ENCODE measurements at regions of chr17 and their contacts with region 1.

Region 1: GRCh38 chr17:42248351-42249179 is 27.6 kb downstream of the STAT5B start:
- DNase-seq: peak; percentile 51 to 95 (median 86)
- ATAC-seq: peak; percentile 90 to 96 (median 92)
- H3K4me3 ChIP-seq: peak overlapping the region; percentile 44 to 63
- H3K4me3 Mint-ChIP-seq: peak overlapping the region; percentile 76 to 86 (median 81)
- H3K27ac ChIP-seq: peak overlapping the region; percentile 91
- H3K27ac Mint-ChIP-seq: peak overlapping the region; percentile 97 to 99
- H3K4me1 ChIP-seq: peaks cover 46 to 50% of the 10 kb centered on the region in 2 experiments
- H3K4me1 Mint-ChIP-seq: peaks cover 74 to 79% (median 78%) of the 10 kb centered on the region in 3 donors
- H3K27me3 ChIP-seq: no peaks in the 10 kb centered on the region
- H3K27me3 Mint-ChIP-seq: no peaks in the 10 kb centered on the region

Region 2: GRCh38 chr17:42221937-42222745 is 26.4 kb before region 1 on chr17:
- CTCF ChIA-PET with region 1: interaction called, 4 to 25 read pairs
- POLR2A ChIA-PET with region 1: interaction called in 1 of 2 experiments, 4 read pairs
- DNase-seq: peak; percentile 7 to 85 (median 57)
- ATAC-seq: peak; percentile 87 to 95 (median 90)
- H3K4me3 ChIP-seq: no peak overlapping the region
- H3K4me3 Mint-ChIP-seq: no peak overlapping the region
- H3K27ac ChIP-seq: no peak overlapping the region
- H3K27ac Mint-ChIP-seq: peak overlapping the region; percentile 29 to 31
- H3K4me1 ChIP-seq: peaks cover 0 to 5% of the 10 kb centered on the region in 2 experiments
- H3K4me1 Mint-ChIP-seq: peaks cover 0 to 14% (median 10%) of the 10 kb centered on the region in 3 donors
- H3K27me3 ChIP-seq: no peaks in the 10 kb centered on the region
- H3K27me3 Mint-ChIP-seq: no peaks in the 10 kb centered on the region

Region 3: GRCh38 chr17:42266918-42267778 is 18.6 kb after region 1 on chr17:
- CTCF ChIA-PET with region 1: interaction called in 1 of 2 experiments, 8 read pairs
- POLR2A ChIA-PET with region 1: interaction called, 15 to 147 read pairs
- DNase-seq: peak in 27 of 35 experiments; percentile 19 to 87 (median 53)
- ATAC-seq: peak; percentile 67 to 90 (median 78)
- H3K4me3 ChIP-seq: no peak overlapping the region
- H3K4me3 Mint-ChIP-seq: peak overlapping the region; percentile 24 to 29 (median 28)
- H3K27ac ChIP-seq: peak overlapping the region; percentile 83
- H3K27ac Mint-ChIP-seq: peak overlapping the region; percentile 84 to 91
- H3K4me1 ChIP-seq: peaks cover 34 to 41% of the 10 kb centered on the region in 2 experiments
- H3K4me1 Mint-ChIP-seq: peaks cover 58 to 68% (median 67%) of the 10 kb centered on the region in 3 donors
- H3K27me3 ChIP-seq: no peaks in the 10 kb centered on the region
- H3K27me3 Mint-ChIP-seq: no peaks in the 10 kb centered on the region

Region 4: GRCh38 chr17:42287926-42288802 is 39.6 kb after region 1 on chr17 and contains the start of gene STAT5A:
- CTCF ChIA-PET with region 1: interaction called, 4 to 5 read pairs
- POLR2A ChIA-PET with region 1: interaction called, 5 to 29 read pairs
- DNase-seq: peak; percentile 56 to 88 (median 77)
- ATAC-seq: peak; percentile 82 to 87 (median 86)
- H3K4me3 ChIP-seq: peak within 1 kb of the TSS; percentile 88 to 90
- H3K4me3 Mint-ChIP-seq: peak within 1 kb of the TSS; percentile 88 to 95 (median 92)
- H3K27ac ChIP-seq: peak within 1 kb of the TSS; percentile 96
- H3K27ac Mint-ChIP-seq: peak within 1 kb of the TSS; percentile 95 to 98
- H3K4me1 ChIP-seq: peaks cover 19 to 57% of the 10 kb centered on the region in 2 experiments
- H3K4me1 Mint-ChIP-seq: peaks cover 49 to 60% (median 57%) of the 10 kb centered on the region in 3 donors
- H3K27me3 ChIP-seq: no peaks in the 10 kb centered on the region
- H3K27me3 Mint-ChIP-seq: no peaks in the 10 kb centered on the region
- total RNA-seq, gene STAT5A: 141 to 160 (median 147) TPM

Region 5: DNA sequence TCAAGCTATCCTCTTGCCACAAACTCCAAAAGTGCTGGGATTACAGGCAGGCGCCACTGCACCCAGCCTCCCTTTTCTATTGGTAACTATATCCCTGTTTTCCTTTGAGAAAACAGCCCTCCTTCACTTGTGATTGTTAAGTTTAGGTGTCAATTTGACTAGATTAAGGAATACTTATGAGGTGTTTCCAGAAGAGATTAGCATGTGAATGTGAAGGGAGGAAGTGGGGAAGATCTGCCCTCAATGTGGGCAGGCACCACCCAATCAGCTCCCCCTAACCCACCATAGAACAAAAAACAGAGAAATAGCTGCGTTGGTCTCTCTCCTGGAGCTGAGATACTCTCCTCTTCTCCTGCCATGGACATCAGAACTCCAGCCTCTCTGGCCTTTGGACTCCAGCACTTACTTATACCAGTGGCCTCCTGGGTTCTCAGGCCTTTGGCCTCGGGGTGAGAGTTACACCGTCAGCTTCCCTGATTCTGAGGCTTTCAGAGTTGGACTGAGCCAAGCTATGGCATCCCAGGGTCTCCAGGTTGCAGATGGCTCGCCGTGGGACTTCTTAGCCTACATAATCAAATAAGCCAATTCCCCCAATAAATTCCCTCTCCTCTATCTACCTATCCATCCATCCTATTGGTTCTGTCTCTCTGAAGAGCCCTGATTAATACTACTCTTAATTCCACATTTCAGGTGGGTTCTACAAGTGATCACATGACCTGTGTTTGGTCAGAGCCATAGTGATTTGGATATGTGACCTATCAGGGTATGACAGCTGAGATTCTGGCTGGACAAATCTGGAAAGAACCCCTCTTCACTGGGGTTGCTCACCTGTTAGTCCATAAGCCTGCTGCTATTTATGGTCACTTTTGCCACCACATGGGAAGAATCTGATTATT is 151.6 kb after region 1 on chr17:
- CTCF ChIA-PET with region 1: no interaction called
- POLR2A ChIA-PET with region 1: interaction called in 1 of 2 experiments, 10 read pairs
- DNase-seq: no peak
- ATAC-seq: peak; percentile 55 to 79 (median 67)
- H3K4me3 ChIP-seq: no peak overlapping the region
- H3K4me3 Mint-ChIP-seq: peak overlapping the region in 1 of 3 donors; percentile 28
- H3K27ac ChIP-seq: no peak overlapping the region
- H3K27ac Mint-ChIP-seq: peak overlapping the region; percentile 11 to 59
- H3K4me1 ChIP-seq: peaks cover 8 to 15% of the 10 kb centered on the region in 2 experiments
- H3K4me1 Mint-ChIP-seq: peaks cover 10 to 16% (median 10%) of the 10 kb centered on the region in 3 donors
- H3K27me3 ChIP-seq: peaks cover 0 to 17% of the 10 kb centered on the region in 2 experiments
- H3K27me3 Mint-ChIP-seq: peaks cover 0 to 4% of the 10 kb centered on the region in 2 donors